ENCODE measurements at regions of chr1 and their contacts with region 1.

Region 1: GRCh38 chr1:61950418-61950817 is 208.1 kb downstream of the PATJ start:
- DNase-seq: no peak
- ATAC-seq: no peak
- H3K4me3 Mint-ChIP-seq: no peak overlapping the region
- H3K27ac Mint-ChIP-seq: no peak overlapping the region
- H3K4me1 Mint-ChIP-seq: no peaks in the 10 kb centered on the region
- H3K27me3 Mint-ChIP-seq: no peaks in the 10 kb centered on the region

Region 2: GRCh38 chr1:61028136-61028535 is 922.3 kb before region 1 on chr1:
- CTCF ChIA-PET with region 1: no interaction called
- POLR2A ChIA-PET with region 1: no interaction called
- intact Hi-C with region 1: no loop called
- DNase-seq: no peak
- ATAC-seq: no peak
- H3K4me3 Mint-ChIP-seq: no peak overlapping the region
- H3K27ac Mint-ChIP-seq: no peak overlapping the region
- H3K4me1 Mint-ChIP-seq: no peaks in the 10 kb centered on the region
- H3K27me3 Mint-ChIP-seq: no peaks in the 10 kb centered on the region

Region 3: GRCh38 chr1:62070384-62071011 is 120.1 kb after region 1 on chr1:
- CTCF ChIA-PET with region 1: no interaction called
- POLR2A ChIA-PET with region 1: no interaction called
- intact Hi-C with region 1: loop called in 1 of 2 experiments (anchors 2 kb)
- DNase-seq: peak; percentile 29
- ATAC-seq: no peak
- H3K4me3 Mint-ChIP-seq: no peak overlapping the region
- H3K27ac Mint-ChIP-seq: no peak overlapping the region
- H3K4me1 Mint-ChIP-seq: no peaks in the 10 kb centered on the region
- H3K27me3 Mint-ChIP-seq: no peaks in the 10 kb centered on the region

Region 4: DNA sequence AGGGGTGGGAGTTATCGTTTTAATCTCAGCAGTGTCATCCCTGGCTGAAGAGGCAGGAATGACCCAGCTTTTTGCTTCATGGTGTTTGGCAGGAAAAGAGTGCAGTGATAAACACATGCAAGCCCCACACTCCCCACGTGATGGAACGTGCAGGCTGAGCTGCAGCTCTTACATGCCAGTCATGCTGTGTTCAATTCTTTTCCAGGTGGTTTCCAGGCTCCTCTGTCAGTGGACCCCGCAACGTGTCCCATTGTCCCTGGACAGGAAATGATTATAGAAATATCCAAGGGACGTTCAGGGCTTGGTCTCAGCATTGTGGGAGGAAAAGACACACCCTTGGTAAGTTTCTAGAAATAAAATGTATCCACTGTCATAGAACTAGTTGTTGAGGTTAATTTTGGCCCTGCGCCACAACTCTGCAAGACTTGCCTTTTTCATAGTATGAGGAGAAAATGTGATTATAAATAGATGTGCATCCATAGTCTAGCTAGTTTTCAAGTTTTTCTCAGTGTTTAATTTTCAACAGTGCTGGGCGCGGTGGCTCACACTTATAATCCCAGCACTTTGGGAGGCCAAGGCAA is 134.0 kb after region 1 on chr1:
- CTCF ChIA-PET with region 1: no interaction called
- POLR2A ChIA-PET with region 1: no interaction called
- intact Hi-C with region 1: no loop called
- DNase-seq: no peak
- ATAC-seq: no peak
- H3K4me3 Mint-ChIP-seq: no peak overlapping the region
- H3K27ac Mint-ChIP-seq: no peak overlapping the region
- H3K4me1 Mint-ChIP-seq: no peaks in the 10 kb centered on the region
- H3K27me3 Mint-ChIP-seq: no peaks in the 10 kb centered on the region

Region 5: DNA sequence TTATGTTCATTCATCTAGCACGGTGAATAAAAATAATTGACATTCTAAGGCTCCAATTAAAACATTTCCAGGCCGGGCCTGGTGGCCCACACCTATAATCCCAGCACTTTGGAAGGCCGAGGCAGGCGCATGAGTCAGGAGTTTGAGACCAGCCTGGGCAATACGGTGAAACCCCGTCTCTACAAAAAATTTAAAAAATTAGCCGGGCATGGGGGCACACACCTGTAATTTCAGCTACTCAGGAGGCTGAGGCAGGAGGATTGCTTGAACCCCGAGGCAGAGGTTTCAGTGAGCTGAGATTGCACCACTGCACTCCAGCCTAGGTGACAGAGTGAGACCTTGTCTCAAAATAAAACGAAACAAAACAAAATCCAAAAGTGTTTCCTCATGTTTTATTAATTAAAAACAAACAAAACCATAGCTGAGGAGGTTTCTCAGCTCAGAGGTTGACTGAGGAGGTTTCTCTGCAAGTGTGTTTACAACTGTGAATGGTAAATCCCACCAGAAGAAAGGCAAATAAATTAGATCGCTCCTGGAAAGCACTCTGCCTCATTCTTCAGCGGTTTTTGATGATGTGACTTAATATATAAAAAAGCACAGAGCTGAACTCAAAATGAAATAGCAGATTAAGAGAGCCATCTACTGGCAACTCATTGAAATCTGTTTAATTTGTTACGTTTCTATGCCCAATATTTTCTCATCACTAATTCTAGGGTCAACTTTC is 795.8 kb after region 1 on chr1:
- CTCF ChIA-PET with region 1: no interaction called
- POLR2A ChIA-PET with region 1: no interaction called
- intact Hi-C with region 1: no loop called
- DNase-seq: no peak
- ATAC-seq: no peak
- H3K4me3 Mint-ChIP-seq: no peak overlapping the region
- H3K27ac Mint-ChIP-seq: no peak overlapping the region
- H3K4me1 Mint-ChIP-seq: no peaks in the 10 kb centered on the region
- H3K27me3 Mint-ChIP-seq: peaks cover 4% of the 10 kb centered on the region

Measured in activated CD4-positive, alpha-beta T cell treated with anti-CD3 and anti-CD28 coated beads for 36 hours (primary cell).